ENCODE measurements at regions of chr11 and their contacts with region 1.

Region 1: DNA sequence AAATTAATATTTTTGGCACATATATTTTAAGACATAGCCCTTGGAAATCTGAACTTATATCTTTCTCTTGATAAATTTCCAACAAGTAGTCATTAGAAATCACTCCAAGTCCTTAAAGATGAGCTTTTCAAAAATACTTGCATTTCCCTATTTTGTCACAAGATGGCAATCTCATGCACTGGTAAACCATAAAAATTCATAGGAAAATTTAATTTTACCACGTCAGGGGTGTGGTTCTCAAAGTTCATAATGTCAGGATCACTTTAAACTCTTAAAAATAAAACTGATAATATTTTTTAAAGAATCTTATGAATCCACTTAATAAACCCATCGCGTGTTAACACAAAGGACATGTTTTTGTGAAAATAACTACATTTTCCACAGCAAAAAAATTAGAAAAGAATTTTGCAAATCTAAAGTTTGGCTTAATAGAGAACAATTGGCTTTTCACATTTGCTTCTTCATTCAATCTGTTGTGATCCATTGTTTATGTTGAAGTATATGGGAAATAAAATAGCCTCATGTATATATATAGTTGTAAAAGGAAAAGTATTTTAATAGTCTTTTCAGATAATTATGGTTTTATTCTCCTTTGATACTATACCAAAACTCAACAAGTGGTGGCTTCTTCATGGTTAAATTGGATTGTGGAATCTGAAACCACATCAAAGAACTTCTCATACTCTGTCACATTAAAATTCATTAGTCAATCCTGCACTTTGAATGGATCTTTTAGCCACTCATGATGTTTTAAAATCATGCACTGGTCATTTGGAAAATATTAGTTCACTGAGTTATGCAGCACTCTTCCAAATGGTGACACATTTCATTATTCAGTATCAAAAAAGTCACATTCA is 169.1 kb downstream of the CADM1 start:
- DNase-seq: no peak
- ATAC-seq: no peak
- H3K4me3 ChIP-seq: no peak overlapping the region
- H3K27ac ChIP-seq: no peak overlapping the region
- H3K4me1 ChIP-seq: no peaks in the 10 kb centered on the region
- H3K27me3 ChIP-seq: peaks cover 0 to 1% of the 10 kb centered on the region in 2 experiments; a peak in 2 of 4 replicates
- CTCF ChIP-seq: peak; percentile 44 to 64 (median 56); a peak in 5 of 6 replicates
- EP300 ChIP-seq: no peak
- POLR2A ChIP-seq: no peak
- RAD21 ChIP-seq: peak; percentile 73

Region 2: GRCh38 chr11:115201111-115201792 is 133.9 kb before region 1 on chr11:
- CTCF ChIA-PET with region 1: no interaction called
- POLR2A ChIA-PET with region 1: no interaction called
- RAD21 ChIA-PET with region 1: no interaction called
- SMC1A ChIA-PET with region 1: no interaction called
- in situ Hi-C with region 1: no loop called
- intact Hi-C with region 1: no loop called
- DNase-seq: no peak
- ATAC-seq: no peak
- H3K4me3 ChIP-seq: no peak overlapping the region
- H3K27ac ChIP-seq: no peak overlapping the region
- H3K4me1 ChIP-seq: no peaks in the 10 kb centered on the region
- H3K27me3 ChIP-seq: peaks cover 0 to 3% of the 10 kb centered on the region in 2 experiments; a peak in 1 of 4 replicates
- CTCF ChIP-seq: no peak
- EP300 ChIP-seq: no peak
- POLR2A ChIP-seq: no peak
- RAD21 ChIP-seq: no peak

Region 3: DNA sequence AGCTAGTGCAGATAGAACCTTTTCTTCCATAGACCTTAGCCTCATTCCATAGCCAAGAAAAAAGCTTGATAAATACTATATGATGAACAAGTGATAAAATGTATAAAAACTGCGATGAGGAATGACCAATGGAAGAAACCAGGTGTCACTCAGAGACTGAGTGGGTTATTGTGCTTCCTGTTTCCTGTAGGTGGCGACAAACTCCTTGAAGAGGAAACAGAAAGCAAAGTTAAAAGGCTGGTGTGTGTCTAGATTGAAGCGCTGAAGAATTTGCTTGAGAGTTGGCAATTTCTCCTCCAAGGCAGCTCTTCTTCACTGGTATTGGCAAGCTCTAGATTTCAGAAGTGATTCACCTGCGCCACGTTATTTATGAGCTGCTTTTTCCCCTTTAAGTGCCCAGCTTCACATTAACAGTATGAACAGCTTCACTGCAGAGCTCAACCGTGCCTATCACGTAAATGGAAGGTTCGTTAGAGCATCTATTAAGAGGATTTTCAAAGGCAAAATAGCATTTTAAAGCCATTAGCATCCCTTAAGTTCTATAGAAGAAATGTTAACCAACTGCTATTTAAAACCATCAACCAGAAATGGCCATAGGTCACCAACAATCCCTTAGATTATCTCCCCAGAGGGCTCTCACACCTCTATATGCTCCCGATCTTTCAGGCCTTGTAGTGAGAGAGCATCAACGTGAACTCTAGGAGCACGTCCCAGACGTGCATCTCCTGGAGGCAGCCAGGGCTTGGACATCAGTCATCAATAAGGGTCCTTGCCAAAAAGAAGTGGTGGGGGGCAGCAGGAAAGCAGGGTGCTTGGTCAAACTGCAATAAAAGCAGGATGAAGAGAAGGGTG is 10.4 kb before region 1 on chr11:
- CTCF ChIA-PET with region 1: interaction called, 11 read pairs
- POLR2A ChIA-PET with region 1: no interaction called
- RAD21 ChIA-PET with region 1: interaction called, 5 read pairs
- SMC1A ChIA-PET with region 1: interaction called, 5 read pairs
- in situ Hi-C with region 1: no loop called
- intact Hi-C with region 1: no loop called
- DNase-seq: peak; percentile 13
- ATAC-seq: peak; percentile 94
- H3K4me3 ChIP-seq: no peak overlapping the region
- H3K27ac ChIP-seq: no peak overlapping the region
- H3K4me1 ChIP-seq: no peaks in the 10 kb centered on the region
- H3K27me3 ChIP-seq: peaks cover 0 to 2% of the 10 kb centered on the region in 2 experiments; a peak in 3 of 4 replicates
- CTCF ChIP-seq: peak; percentile 76 to 93 (median 83)
- EP300 ChIP-seq: no peak
- POLR2A ChIP-seq: no peak
- RAD21 ChIP-seq: peak; percentile 92

Region 4: DNA sequence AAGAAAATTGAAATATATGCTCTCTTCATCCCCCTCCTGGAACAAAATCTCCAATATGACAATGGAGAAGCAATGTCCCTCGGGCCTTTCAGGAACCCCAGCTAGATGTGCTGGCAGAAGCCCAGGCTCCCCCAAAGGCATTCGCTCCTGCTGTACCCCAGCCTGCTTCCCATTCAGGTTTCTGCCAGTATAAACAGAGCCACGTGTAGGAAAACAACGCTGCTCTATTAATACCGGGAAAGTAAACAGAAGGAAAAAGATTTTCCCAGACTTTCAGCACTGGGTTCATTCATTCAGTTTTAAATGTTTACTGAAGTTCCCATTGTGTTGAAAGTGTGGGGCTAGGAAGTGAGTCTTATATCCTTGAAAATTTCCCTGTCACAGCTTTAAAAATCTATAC is 21.9 kb after region 1 on chr11:
- CTCF ChIA-PET with region 1: no interaction called
- POLR2A ChIA-PET with region 1: no interaction called
- RAD21 ChIA-PET with region 1: no interaction called
- SMC1A ChIA-PET with region 1: no interaction called
- in situ Hi-C with region 1: no loop called
- intact Hi-C with region 1: no loop called
- DNase-seq: no peak
- ATAC-seq: no peak
- H3K4me3 ChIP-seq: no peak overlapping the region
- H3K27ac ChIP-seq: no peak overlapping the region
- H3K4me1 ChIP-seq: no peaks in the 10 kb centered on the region
- H3K27me3 ChIP-seq: no peaks in the 10 kb centered on the region; a peak in 1 of 4 replicates
- CTCF ChIP-seq: no peak
- EP300 ChIP-seq: no peak
- POLR2A ChIP-seq: no peak
- RAD21 ChIP-seq: no peak

Region 5: GRCh38 chr11:115391598-115391997 is 56.4 kb after region 1 on chr11:
- CTCF ChIA-PET with region 1: no interaction called
- POLR2A ChIA-PET with region 1: no interaction called
- RAD21 ChIA-PET with region 1: no interaction called
- SMC1A ChIA-PET with region 1: no interaction called
- in situ Hi-C with region 1: no loop called
- intact Hi-C with region 1: no loop called
- DNase-seq: no peak
- ATAC-seq: no peak
- H3K4me3 ChIP-seq: no peak overlapping the region
- H3K27ac ChIP-seq: no peak overlapping the region
- H3K4me1 ChIP-seq: no peaks in the 10 kb centered on the region
- H3K27me3 ChIP-seq: peaks cover 0 to 6% of the 10 kb centered on the region in 2 experiments; a peak in 1 of 4 replicates
- CTCF ChIP-seq: no peak
- EP300 ChIP-seq: no peak
- POLR2A ChIP-seq: no peak
- RAD21 ChIP-seq: no peak

Region 6: DNA sequence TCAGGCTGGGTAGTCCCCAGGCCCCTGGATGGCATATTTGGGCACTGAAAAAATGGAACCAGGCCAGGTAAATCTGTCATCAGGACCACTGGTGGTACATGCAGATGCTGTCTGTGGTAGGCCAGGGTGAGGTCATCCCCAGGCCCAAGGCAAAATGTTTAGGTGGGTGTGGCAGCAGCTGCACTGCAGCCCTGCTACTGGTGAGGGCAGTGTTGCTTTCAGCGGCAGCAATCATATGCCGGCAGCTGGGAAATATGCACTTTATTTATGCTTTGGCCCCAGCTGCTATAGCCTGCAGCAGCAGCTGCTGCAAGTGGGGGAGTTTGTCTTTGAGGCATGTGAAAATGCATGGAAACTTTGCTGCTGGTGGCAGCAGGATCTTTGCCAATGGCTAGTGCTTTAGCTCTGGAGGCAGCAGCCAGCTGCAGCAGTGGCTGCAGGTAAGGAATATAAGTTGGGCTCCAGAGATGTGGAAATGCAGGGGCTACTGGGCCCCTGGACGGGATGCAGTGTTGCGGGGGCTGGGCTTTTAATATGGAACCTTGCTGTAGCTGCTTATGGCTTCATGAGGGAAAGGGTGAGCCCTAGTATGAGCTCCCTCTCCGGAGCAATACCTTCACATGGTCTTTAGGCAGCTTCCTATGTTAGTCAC is 534.7 kb after region 1 on chr11:
- CTCF ChIA-PET with region 1: no interaction called
- POLR2A ChIA-PET with region 1: no interaction called
- RAD21 ChIA-PET with region 1: no interaction called
- SMC1A ChIA-PET with region 1: no interaction called
- in situ Hi-C with region 1: no loop called
- intact Hi-C with region 1: no loop called
- DNase-seq: peak; percentile 51
- ATAC-seq: peak; percentile 87
- H3K4me3 ChIP-seq: no peak overlapping the region
- H3K27ac ChIP-seq: no peak overlapping the region
- H3K4me1 ChIP-seq: peaks cover 49% of the 10 kb centered on the region
- H3K27me3 ChIP-seq: no peaks in the 10 kb centered on the region
- CTCF ChIP-seq: peak; percentile 80 to 90 (median 85)
- EP300 ChIP-seq: peak in 1 of 2 experiments; percentile 24; a peak in 1 of 4 replicates
- POLR2A ChIP-seq: no peak
- RAD21 ChIP-seq: peak; percentile 77

Region 7: DNA sequence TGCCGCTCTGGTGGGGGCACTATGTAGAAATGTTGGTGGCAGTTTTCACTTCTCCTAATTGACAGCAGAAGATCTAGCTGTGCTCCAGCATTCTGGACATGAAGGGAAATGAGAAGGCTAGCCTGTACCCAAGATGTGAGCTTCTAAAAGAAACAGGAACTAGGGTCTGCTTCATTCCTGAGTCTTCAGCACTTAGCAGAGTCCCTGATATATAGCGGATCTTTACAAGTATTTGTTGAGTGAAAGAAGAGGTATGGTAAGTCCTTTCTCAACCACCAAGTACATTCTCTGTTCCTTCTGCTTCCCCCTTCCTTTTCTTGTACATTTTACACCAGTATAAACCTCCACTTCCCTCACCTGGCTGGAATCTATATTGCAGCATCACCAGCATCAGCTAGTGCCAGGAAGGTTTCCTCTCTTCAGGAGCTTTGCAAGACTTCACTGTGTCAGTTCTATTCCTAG is 577.4 kb after region 1 on chr11:
- CTCF ChIA-PET with region 1: interaction called, 3 read pairs
- POLR2A ChIA-PET with region 1: no interaction called
- RAD21 ChIA-PET with region 1: interaction called, 7 read pairs
- SMC1A ChIA-PET with region 1: interaction called, 9 read pairs
- in situ Hi-C with region 1: loop called (anchors 10 kb)
- intact Hi-C with region 1: loop called (anchors 2 kb)
- DNase-seq: no peak
- ATAC-seq: peak; percentile 90
- H3K4me3 ChIP-seq: no peak overlapping the region; the same call in 1 of the 2 replicates
- H3K27ac ChIP-seq: peak overlapping the region; percentile 56
- H3K4me1 ChIP-seq: peaks cover 24% of the 10 kb centered on the region
- H3K27me3 ChIP-seq: no peaks in the 10 kb centered on the region
- CTCF ChIP-seq: peak; percentile 42 to 67 (median 48); a peak in 5 of 6 replicates
- EP300 ChIP-seq: no peak
- POLR2A ChIP-seq: no peak
- RAD21 ChIP-seq: peak; percentile 85

Region 8: DNA sequence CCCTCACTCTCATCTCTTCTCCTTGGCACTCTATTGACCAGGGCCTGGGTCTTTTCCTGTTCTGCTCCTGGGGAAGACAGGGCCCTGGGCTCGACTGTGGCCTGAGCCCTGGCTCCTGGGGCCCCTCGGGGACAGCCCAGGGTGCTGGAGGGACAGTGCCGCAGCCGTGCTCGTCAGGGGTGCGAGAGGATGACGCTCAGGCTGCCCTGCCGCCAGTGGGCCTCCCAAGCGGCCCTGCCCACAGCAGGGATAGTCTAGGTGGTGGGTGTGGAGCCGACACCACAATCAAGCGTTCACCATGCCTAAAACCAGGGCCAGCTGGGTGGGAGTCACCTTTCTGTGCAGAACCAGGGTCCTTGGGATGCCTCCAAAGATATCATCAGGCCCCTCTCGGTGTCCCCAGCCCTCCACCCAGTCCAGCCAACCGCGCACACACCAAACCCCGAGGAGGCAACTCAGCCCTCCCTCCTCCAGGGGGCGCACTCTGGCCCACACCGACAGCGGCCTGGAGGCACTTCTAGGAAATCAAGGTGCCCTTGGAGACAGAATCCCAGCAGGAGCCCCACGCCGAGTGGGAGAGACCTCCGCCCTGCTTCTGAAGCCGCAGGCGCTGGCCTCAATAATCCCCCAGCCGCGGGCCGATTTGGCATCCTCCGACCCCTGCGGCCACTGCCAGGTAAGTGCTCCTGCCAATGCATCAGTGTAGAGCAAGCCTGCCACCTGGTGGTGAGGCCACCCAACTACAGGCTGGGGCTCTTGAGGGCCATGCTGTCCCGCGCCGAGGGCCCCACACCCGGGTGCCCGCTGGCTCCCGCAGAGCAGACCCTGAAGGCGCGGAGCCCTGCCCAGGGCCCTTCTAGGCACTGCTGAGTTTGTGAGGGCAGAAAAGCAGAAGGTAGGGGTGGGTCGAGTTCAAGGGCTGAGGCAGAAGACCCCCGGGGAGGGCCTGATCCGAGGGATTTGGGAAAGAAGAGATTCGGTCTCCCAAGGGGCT is 941.2 kb after region 1 on chr11:
- CTCF ChIA-PET with region 1: interaction called, 6 read pairs
- POLR2A ChIA-PET with region 1: no interaction called
- RAD21 ChIA-PET with region 1: interaction called, 4 read pairs
- SMC1A ChIA-PET with region 1: interaction called, 5 read pairs
- in situ Hi-C with region 1: loop called (anchors 5 kb)
- intact Hi-C with region 1: loop called (anchors 1 kb)
- DNase-seq: no peak
- ATAC-seq: peak; percentile 97
- H3K4me3 ChIP-seq: no peak overlapping the region
- H3K27ac ChIP-seq: no peak overlapping the region
- H3K4me1 ChIP-seq: no peaks in the 10 kb centered on the region
- H3K27me3 ChIP-seq: no peaks in the 10 kb centered on the region; a peak in 1 of 4 replicates
- CTCF ChIP-seq: peak; percentile 67 to 90 (median 87)
- EP300 ChIP-seq: no peak
- POLR2A ChIP-seq: no peak
- RAD21 ChIP-seq: peak; percentile 92

Region 9: GRCh38 chr11:116691771-116692177 is 1356.6 kb after region 1 on chr11:
- CTCF ChIA-PET with region 1: no interaction called
- POLR2A ChIA-PET with region 1: no interaction called
- RAD21 ChIA-PET with region 1: no interaction called
- SMC1A ChIA-PET with region 1: no interaction called
- in situ Hi-C with region 1: loop called (anchors 10 kb)
- intact Hi-C with region 1: no loop called
- DNase-seq: no peak
- ATAC-seq: peak; percentile 94
- H3K4me3 ChIP-seq: no peak overlapping the region
- H3K27ac ChIP-seq: no peak overlapping the region
- H3K4me1 ChIP-seq: no peaks in the 10 kb centered on the region
- H3K27me3 ChIP-seq: no peaks in the 10 kb centered on the region
- CTCF ChIP-seq: peak; percentile 79 to 94 (median 93)
- EP300 ChIP-seq: no peak
- POLR2A ChIP-seq: no peak
- RAD21 ChIP-seq: peak; percentile 85